ENCODE measurements at regions of chr12 and their contacts with region 1.

Region 1: DNA sequence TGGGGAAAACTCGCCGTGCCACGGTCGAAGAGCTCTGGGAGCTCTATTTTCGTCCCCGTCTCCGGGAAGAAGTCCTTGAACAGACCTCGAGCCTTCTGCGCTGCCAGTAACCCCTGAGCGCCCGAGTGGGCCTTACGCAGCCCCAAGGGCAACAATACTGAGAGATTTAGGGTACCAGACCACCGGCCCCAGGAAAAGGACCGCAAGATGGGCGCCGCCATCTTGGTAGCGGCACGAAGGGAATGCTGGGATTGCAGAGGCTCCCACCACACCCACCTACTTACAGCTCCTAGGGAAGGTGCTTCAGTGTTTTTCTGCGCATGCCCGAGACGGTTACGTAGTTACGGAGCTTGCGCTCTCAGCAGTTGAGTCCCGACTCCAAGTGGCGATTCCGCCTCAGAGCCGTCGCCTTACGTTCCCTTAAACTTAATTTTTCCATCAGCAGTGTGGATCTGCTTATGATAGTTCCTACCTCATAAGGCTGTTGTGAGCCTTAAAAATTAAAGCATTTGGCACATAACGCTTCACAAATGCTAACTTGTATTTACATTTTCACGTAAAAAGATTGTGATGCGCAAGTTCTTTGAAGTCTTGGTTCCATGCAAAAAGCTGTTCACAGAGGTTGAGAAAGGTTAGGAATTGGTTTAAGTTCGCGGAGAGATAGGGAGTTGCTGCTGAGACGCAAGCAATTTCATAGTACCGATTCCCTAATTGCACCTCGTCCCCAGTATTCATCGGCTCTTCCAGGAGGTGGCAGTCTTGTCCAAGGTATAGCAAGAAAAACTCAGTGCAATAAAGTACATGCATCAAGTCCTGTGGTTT is at the start of gene YARS2:
- DNase-seq: peak; percentile 94
- ATAC-seq: peak; percentile 98
- H3K4me3 ChIP-seq: peak within 1 kb of the TSS; percentile 93 to 98
- H3K27ac ChIP-seq: peak within 1 kb of the TSS; percentile 99
- H3K4me1 ChIP-seq: peaks cover 10% of the 10 kb centered on the region
- H3K27me3 ChIP-seq: peaks cover 6% of the 10 kb centered on the region; the same call in 1 of the 2 replicates
- CTCF ChIP-seq: peak; percentile 91
- total RNA-seq, gene YARS2: 28.0 TPM

Region 2: GRCh38 chr12:32644431-32644830 is 111.4 kb before region 1 on chr12:
- CTCF ChIA-PET with region 1: no interaction called
- POLR2A ChIA-PET with region 1: no interaction called
- in situ Hi-C with region 1: no loop called
- intact Hi-C with region 1: no loop called
- DNase-seq: no peak
- ATAC-seq: no peak
- H3K4me3 ChIP-seq: no peak overlapping the region
- H3K27ac ChIP-seq: no peak overlapping the region
- H3K4me1 ChIP-seq: no peaks in the 10 kb centered on the region
- H3K27me3 ChIP-seq: no peaks in the 10 kb centered on the region
- CTCF ChIP-seq: no peak

Region 3: DNA sequence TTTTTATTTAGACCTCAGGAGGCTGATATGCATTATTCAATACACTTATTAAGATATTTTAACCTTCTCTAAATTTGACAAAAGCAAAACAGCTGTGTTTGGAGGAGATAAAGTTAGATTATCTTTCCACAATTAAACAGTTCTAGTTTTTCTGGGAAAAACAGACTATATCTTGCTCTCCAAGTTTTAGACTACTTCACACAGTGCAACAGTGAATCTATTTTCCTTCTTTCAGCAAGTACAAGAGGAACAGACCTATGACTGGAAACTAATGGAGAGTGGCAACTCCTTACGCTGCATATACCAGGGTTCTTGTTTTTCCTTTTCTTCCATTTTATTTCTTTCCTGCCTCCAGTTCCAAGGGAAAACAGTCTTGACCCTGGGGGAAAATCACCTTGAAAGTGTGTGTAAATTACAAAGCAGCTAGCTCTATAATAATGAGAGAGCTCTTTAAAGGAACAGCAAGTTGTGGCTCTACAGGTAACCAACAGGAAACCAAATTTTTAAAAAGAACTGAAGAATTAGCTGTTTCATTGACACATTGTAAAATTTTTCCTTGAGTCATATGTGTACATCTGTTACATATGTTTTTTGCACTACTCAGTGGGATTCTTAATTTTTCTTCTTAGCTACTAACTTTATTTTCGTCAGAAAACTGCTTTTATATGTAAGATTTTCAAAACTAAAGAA is 49.4 kb before region 1 on chr12:
- CTCF ChIA-PET with region 1: no interaction called
- POLR2A ChIA-PET with region 1: interaction called, 10 read pairs
- in situ Hi-C with region 1: no loop called
- intact Hi-C with region 1: no loop called
- DNase-seq: no peak
- ATAC-seq: no peak
- H3K4me3 ChIP-seq: no peak overlapping the region
- H3K27ac ChIP-seq: no peak overlapping the region
- H3K4me1 ChIP-seq: no peaks in the 10 kb centered on the region
- H3K27me3 ChIP-seq: no peaks in the 10 kb centered on the region
- CTCF ChIP-seq: no peak

Region 4: GRCh38 chr12:32918890-32919801 is 163.3 kb after region 1 on chr12:
- CTCF ChIA-PET with region 1: interaction called, 3 read pairs
- POLR2A ChIA-PET with region 1: no interaction called
- in situ Hi-C with region 1: no loop called
- intact Hi-C with region 1: loop called (anchors 1 kb)
- DNase-seq: no peak
- ATAC-seq: 0 out of 2 replicates have a peak, but pooled peaks have one; percentile 63
- H3K4me3 ChIP-seq: no peak overlapping the region
- H3K27ac ChIP-seq: no peak overlapping the region
- H3K4me1 ChIP-seq: no peaks in the 10 kb centered on the region
- H3K27me3 ChIP-seq: no peaks in the 10 kb centered on the region; the same call in 1 of the 2 replicates
- CTCF ChIP-seq: peak; percentile 66

Region 5: DNA sequence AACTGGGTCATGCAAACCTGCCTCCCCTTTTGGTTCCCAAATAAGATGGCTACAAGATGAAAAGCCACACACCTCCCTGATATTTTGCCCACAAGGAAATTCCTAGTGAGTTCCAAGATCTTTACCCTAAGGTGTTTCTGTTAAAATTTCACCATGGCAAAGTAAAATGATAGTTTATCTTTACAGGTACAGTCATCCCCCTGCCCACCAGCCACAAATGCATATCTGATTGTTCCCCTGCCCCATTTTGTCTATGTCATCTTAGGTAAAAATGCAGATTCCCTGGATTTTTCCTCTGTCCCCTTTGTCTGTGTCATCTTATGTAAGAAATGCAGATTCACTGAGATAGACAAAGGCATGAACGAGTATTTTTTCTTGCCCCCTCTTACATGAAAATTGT is 173.2 kb after region 1 on chr12:
- CTCF ChIA-PET with region 1: interaction called, 11 read pairs
- POLR2A ChIA-PET with region 1: no interaction called
- in situ Hi-C with region 1: no loop called
- intact Hi-C with region 1: no loop called
- DNase-seq: no peak
- ATAC-seq: no peak
- H3K4me3 ChIP-seq: no peak overlapping the region
- H3K27ac ChIP-seq: no peak overlapping the region
- H3K4me1 ChIP-seq: no peaks in the 10 kb centered on the region
- H3K27me3 ChIP-seq: no peaks in the 10 kb centered on the region
- CTCF ChIP-seq: no peak

Region 6: GRCh38 chr12:34022079-34022830 is 1266.4 kb after region 1 on chr12 and contains the start of gene ALG10:
- CTCF ChIA-PET with region 1: interaction called, 4 read pairs
- POLR2A ChIA-PET with region 1: no interaction called
- in situ Hi-C with region 1: no loop called
- intact Hi-C with region 1: loop called (anchors 2 kb)
- DNase-seq: peak; percentile 97
- ATAC-seq: peak; percentile 100
- H3K4me3 ChIP-seq: peak within 1 kb of the TSS; percentile 79 to 96
- H3K27ac ChIP-seq: peak within 1 kb of the TSS; percentile 88
- H3K4me1 ChIP-seq: peaks cover 7% of the 10 kb centered on the region
- H3K27me3 ChIP-seq: peaks cover 3% of the 10 kb centered on the region; the same call in 1 of the 2 replicates
- CTCF ChIP-seq: peak; percentile 61
- total RNA-seq, gene ALG10: 10.3 TPM

Measured in Panc1 (cell line).